Esophagus muscularis mucosa (tissue), 4 donors: ENCODE measurements at regions of chr7 and their contacts with region 1.

Region 1: GRCh38 chr7:22854158-22855048 is 31.8 kb upstream of the TOMM7 start:
- DNase-seq: peak; percentile 98
- H3K4me3 ChIP-seq: peak overlapping the region; percentile 64 to 86 (median 81)
- H3K27ac ChIP-seq: peak overlapping the region; percentile 89 to 98 (median 98)
- H3K4me1 ChIP-seq: peaks cover 31 to 61% (median 58%) of the 10 kb centered on the region in 4 donors
- H3K27me3 ChIP-seq: no peaks in the 10 kb centered on the region
- CTCF ChIP-seq: peak in 1 of 3 experiments; percentile 55
- EP300 ChIP-seq: no peak
- POLR2A ChIP-seq: peak; percentile 83

Region 2: GRCh38 chr7:22945584-22945983 is 91.2 kb after region 1 on chr7:
- intact Hi-C with region 1: loop called (anchors 5 kb)
- DNase-seq: no peak
- H3K4me3 ChIP-seq: no peak overlapping the region
- H3K27ac ChIP-seq: no peak overlapping the region
- H3K4me1 ChIP-seq: peaks cover 0 to 7% (median 0%) of the 10 kb centered on the region in 4 donors
- H3K27me3 ChIP-seq: no peaks in the 10 kb centered on the region
- CTCF ChIP-seq: no peak
- EP300 ChIP-seq: no peak
- POLR2A ChIP-seq: no peak

Region 3: GRCh38 chr7:23013715-23014649 is 159.6 kb after region 1 on chr7 and contains the start of gene HYCC1:
- intact Hi-C with region 1: loop called (anchors 5 kb)
- DNase-seq: peak; percentile 100
- H3K4me3 ChIP-seq: peak within 1 kb of the TSS; percentile 80 to 98 (median 94)
- H3K27ac ChIP-seq: peak within 1 kb of the TSS; percentile 85 to 93 (median 88)
- H3K4me1 ChIP-seq: peaks cover 37 to 55% (median 41%) of the 10 kb centered on the region in 4 donors
- H3K27me3 ChIP-seq: no peaks in the 10 kb centered on the region
- CTCF ChIP-seq: peak; percentile 52 to 74 (median 71)
- EP300 ChIP-seq: no peak
- POLR2A ChIP-seq: peak; percentile 90
- total RNA-seq, gene HYCC1: 39.2 to 62.6 (median 47.2) TPM

Region 4: DNA sequence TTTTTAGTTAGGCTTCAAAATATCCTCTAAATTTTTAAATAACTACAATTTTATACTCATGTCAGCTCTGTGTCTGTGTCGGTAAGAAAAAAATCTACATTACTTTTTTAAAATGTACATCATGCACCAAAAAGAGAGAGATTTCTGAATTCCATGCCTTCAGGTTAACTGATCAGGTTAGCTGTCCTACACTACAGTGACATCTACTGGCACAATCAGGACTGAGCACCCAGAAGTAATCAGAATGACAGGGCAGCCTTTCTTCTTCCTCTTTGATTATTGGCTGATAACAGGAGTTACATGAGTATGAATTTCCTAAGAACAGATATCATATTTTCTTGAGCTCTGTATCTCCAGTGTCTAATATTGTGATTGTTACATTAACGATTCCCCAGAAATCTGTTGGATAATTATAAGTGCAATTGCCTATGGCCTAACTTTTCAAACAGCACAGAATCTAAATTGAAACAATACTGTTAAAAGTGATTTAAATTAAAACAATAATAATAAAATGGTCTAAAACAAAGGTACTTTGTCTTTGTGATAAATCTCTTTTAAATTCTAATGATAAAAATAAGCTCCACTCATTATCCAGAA is 201.3 kb after region 1 on chr7:
- intact Hi-C with region 1: loop called (anchors 2 kb)
- DNase-seq: no peak
- H3K4me3 ChIP-seq: no peak overlapping the region
- H3K27ac ChIP-seq: no peak overlapping the region
- H3K4me1 ChIP-seq: peaks cover 0 to 10% (median 7%) of the 10 kb centered on the region in 4 donors
- H3K27me3 ChIP-seq: no peaks in the 10 kb centered on the region
- CTCF ChIP-seq: peak; percentile 76 to 91 (median 88)
- EP300 ChIP-seq: no peak
- POLR2A ChIP-seq: no peak